SK-N-SH (cell line): ENCODE measurements at regions of chrX and their contacts with region 1.

Region 1: DNA sequence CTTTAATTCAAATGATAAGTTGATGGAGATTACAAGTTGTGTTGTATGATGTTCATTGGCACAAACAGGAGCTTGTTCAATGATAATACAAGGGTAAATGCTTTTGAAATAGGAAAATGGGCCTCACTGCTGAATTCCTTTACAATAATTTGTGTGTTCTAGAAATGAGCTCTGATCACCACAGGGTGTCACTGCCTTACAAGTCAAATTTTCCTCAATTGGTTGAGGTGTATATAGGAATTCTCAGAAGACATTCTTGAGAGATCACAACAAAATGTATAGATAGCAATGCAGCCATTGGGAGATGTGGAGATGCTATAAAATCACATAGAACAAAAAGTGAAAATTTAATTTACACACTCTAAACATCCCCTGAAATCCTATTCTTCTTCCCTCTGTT is 49.6 kb downstream of the KLF8 start:
- DNase-seq: peak; percentile 3
- H3K4me3 ChIP-seq: no peak overlapping the region
- H3K27ac ChIP-seq: no peak overlapping the region
- H3K4me1 ChIP-seq: no peaks in the 10 kb centered on the region
- H3K27me3 ChIP-seq: peaks cover 12% of the 10 kb centered on the region; the same call in 1 of the 2 replicates
- CTCF ChIP-seq: peak; percentile 47
- EP300 ChIP-seq: no peak
- RAD21 ChIP-seq: peak; percentile 70

Region 2: GRCh38 chrX:56233682-56234081 is 48.1 kb before region 1 on chrX:
- CTCF ChIA-PET with region 1: no interaction called
- POLR2A ChIA-PET with region 1: no interaction called
- DNase-seq: no peak
- H3K4me3 ChIP-seq: no peak overlapping the region
- H3K27ac ChIP-seq: no peak overlapping the region
- H3K4me1 ChIP-seq: no peaks in the 10 kb centered on the region
- H3K27me3 ChIP-seq: peaks cover 45% of the 10 kb centered on the region
- CTCF ChIP-seq: no peak
- EP300 ChIP-seq: no peak
- RAD21 ChIP-seq: no peak

Region 3: DNA sequence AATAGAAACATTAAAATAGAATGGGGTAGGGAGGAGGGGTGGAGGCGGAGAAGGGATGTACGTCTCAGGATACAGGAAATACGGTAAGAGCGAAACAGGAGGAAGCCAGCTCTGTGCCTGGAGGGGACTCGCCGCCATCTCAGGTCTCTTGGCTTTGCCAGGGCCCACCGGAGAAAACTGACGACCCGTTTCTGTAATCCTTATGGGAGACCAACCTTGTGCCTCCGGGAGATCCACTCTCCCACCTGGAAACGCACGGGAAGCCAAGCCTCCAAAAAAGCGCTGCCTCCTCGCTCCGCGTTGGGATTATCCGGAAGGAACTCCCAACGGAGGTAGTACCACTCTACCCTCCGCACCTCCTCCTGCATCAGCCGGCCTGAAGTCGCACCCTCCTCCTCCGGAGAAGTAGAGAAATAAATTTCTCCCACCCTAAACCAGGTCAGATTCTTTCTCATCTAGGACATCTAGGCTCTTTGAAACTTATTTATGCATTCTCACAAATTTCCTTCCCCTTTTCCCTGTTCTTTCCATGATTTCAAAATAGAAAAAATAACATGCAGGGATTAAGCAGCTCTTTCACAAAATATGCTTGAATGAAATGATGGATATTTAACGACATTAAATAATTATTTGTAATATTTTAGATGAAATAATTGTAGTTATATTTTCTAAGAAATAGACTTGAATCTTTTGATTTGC is 447.5 kb after region 1 on chrX and contains the start of gene NBDY:
- CTCF ChIA-PET with region 1: interaction called, 48 read pairs
- POLR2A ChIA-PET with region 1: no interaction called
- DNase-seq: peak; percentile 35
- H3K4me3 ChIP-seq: peak within 1 kb of the TSS; percentile 72 to 87
- H3K27ac ChIP-seq: peak within 1 kb of the TSS; percentile 81 to 89
- H3K4me1 ChIP-seq: no peaks in the 10 kb centered on the region; a peak in 1 of 4 replicates
- H3K27me3 ChIP-seq: peaks cover 4% of the 10 kb centered on the region; the same call in 1 of the 2 replicates
- CTCF ChIP-seq: no peak
- EP300 ChIP-seq: no peak
- RAD21 ChIP-seq: no peak
- polyA plus RNA-seq, gene NBDY: 56.0 and 68.2 TPM in 2 replicates